ENCODE measurements at regions of chr5 and their contacts with region 1.

Region 1: DNA sequence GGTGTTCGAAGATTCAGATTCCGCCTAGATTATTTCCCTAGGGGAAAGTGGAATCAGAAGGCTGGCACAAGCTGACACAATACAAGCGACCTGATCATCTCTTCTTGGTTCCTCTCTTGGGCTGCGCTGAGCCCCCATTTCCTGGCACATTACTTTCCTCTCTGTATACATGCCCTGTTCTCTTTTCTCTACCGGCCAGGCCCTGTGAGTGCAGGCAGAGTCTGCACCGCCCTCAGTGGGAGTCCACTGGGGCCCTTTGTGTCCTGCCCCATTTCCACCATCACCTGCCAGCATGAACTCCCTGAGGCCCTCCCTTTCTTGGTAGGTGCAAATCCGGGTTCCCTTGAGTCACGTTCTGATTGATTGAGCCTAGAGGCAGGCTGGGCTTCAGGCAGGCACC is 287.9 kb downstream of the MSX2 start:
- DNase-seq: no peak
- H3K4me3 ChIP-seq: no peak overlapping the region
- H3K27ac ChIP-seq: no peak overlapping the region
- H3K4me1 ChIP-seq: no peaks in the 10 kb centered on the region
- H3K27me3 ChIP-seq: no peaks in the 10 kb centered on the region
- CTCF ChIP-seq: no peak
- POLR2A ChIP-seq: no peak

Region 2: DNA sequence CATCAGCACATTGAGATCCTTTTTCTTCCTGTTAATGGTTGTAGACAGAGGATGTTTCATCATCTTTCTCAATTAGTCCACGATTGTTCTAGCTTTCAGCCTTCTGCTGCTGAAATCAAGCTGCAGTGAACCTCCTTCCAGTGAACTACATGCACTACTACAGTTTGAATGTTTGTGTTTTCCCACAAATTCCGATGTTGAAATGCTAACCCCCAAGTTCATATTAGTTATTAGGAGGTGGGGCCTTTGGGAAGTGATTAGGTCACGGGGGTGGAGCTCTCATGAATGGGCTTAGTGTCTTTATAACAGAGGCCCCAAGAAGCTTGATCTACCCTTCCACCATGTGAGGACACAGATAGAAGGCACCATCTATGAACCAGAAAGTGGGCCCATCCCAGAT is 933.9 kb before region 1 on chr5:
- intact Hi-C with region 1: no loop called
- DNase-seq: no peak
- H3K4me3 ChIP-seq: no peak overlapping the region
- H3K27ac ChIP-seq: no peak overlapping the region
- H3K4me1 ChIP-seq: no peaks in the 10 kb centered on the region
- H3K27me3 ChIP-seq: no peaks in the 10 kb centered on the region
- CTCF ChIP-seq: no peak
- POLR2A ChIP-seq: no peak

Region 3: DNA sequence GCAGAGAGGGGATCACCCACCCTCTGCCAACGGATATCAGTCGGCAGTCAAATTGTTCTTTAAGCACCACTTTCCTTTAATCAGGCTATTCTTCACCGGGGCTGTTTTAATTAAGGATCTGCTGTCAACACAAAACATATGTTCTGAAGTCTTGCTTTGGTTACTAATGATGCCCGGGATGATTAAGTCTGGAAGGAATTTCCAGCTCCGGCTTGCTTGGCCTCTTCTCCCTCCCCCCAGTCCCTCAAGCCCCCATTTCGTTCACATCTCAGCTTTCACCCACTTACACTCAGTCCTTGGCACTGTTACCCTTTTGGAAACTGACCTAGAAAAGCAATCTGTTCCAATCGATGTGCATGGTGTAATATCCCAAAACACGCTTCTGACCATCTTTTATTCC is 213.1 kb before region 1 on chr5:
- intact Hi-C with region 1: loop called (anchors 5 kb)
- DNase-seq: no peak
- H3K4me3 ChIP-seq: no peak overlapping the region
- H3K27ac ChIP-seq: no peak overlapping the region
- H3K4me1 ChIP-seq: no peaks in the 10 kb centered on the region
- H3K27me3 ChIP-seq: peaks cover 0 to 31% of the 10 kb centered on the region in 2 donors
- CTCF ChIP-seq: no peak
- POLR2A ChIP-seq: no peak

Region 4: GRCh38 chr5:176337913-176338312 is 1325.6 kb after region 1 on chr5:
- intact Hi-C with region 1: no loop called
- DNase-seq: no peak
- H3K4me3 ChIP-seq: no peak overlapping the region
- H3K27ac ChIP-seq: no peak overlapping the region
- H3K4me1 ChIP-seq: no peaks in the 10 kb centered on the region
- H3K27me3 ChIP-seq: no peaks in the 10 kb centered on the region
- CTCF ChIP-seq: no peak
- POLR2A ChIP-seq: no peak

Measured in breast epithelium (tissue), 4 donors.